MCF 10A (cell line): ENCODE measurements at regions of chr2 and their contacts with region 1.

Region 1: GRCh38 chr2:172234716-172235691 is 132.3 kb upstream of the DLX2 start:
- DNase-seq: no peak
- H3K4me3 Mint-ChIP-seq: no peak overlapping the region
- H3K27ac Mint-ChIP-seq: no peak overlapping the region
- H3K4me1 Mint-ChIP-seq: peaks cover 25% of the 10 kb centered on the region
- H3K27me3 Mint-ChIP-seq: no peaks in the 10 kb centered on the region
- CTCF ChIP-seq: no peak

Region 2: GRCh38 chr2:172179045-172179701 is 55.8 kb before region 1 on chr2:
- CTCF ChIA-PET with region 1: interaction called, 54 read pairs
- POLR2A ChIA-PET with region 1: interaction called, 65 read pairs
- intact Hi-C with region 1: no loop called
- DNase-seq: peak; percentile 89
- H3K4me3 Mint-ChIP-seq: no peak overlapping the region
- H3K27ac Mint-ChIP-seq: peak overlapping the region; percentile 9
- H3K4me1 Mint-ChIP-seq: peaks cover 28% of the 10 kb centered on the region
- H3K27me3 Mint-ChIP-seq: no peaks in the 10 kb centered on the region
- CTCF ChIP-seq: no peak

Region 3: GRCh38 chr2:172246649-172247048 is 11.6 kb after region 1 on chr2:
- CTCF ChIA-PET with region 1: interaction called, 20 read pairs
- POLR2A ChIA-PET with region 1: interaction called, 245 read pairs
- intact Hi-C with region 1: no loop called
- DNase-seq: peak; percentile 57
- H3K4me3 Mint-ChIP-seq: no peak overlapping the region
- H3K27ac Mint-ChIP-seq: peak overlapping the region; percentile 100
- H3K4me1 Mint-ChIP-seq: peaks cover 68% of the 10 kb centered on the region
- H3K27me3 Mint-ChIP-seq: no peaks in the 10 kb centered on the region
- CTCF ChIP-seq: no peak

Region 4: DNA sequence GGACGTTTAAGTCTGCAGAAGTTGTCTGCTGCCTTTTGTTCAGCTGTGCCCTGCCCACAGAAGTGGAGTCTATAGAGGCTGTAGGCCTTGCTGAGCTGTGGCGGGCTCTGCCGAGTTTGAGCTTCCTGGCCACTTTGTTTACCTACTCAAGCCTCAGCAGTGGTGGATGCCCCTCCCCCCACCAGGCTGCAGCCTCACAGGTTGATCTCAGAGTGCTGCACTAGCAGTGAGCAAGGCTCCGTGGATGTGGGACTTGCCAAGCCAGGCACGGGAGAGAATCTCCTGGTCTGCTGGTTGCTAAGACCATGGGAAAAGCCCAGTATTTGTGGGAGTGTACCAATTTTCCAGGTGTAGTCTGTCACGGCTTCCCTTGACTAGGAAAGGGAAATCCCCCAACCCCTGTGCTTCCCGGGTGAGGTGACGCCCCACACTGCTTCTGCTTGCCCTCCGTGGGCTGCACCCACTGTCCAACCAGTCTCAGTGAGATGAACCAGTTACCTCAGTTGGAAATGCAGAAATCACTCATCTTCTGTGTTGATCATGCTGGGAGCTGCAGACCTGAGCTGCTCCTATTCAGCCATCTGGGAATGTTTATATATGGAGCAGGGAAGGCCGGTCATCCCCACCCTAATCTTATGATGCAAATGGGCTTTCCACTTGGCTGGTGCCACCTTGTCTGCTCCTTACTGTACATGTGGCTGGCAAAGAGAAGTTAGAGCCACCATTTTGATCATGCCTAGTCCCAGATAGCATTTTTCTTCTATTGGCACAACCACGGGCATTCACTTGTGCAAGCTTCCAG is 35.5 kb after region 1 on chr2:
- CTCF ChIA-PET with region 1: no interaction called
- POLR2A ChIA-PET with region 1: interaction called, 10 read pairs
- intact Hi-C with region 1: no loop called
- DNase-seq: no peak
- H3K4me3 Mint-ChIP-seq: no peak overlapping the region
- H3K27ac Mint-ChIP-seq: no peak overlapping the region
- H3K4me1 Mint-ChIP-seq: peaks cover 6% of the 10 kb centered on the region
- H3K27me3 Mint-ChIP-seq: no peaks in the 10 kb centered on the region
- CTCF ChIP-seq: no peak

Region 5: DNA sequence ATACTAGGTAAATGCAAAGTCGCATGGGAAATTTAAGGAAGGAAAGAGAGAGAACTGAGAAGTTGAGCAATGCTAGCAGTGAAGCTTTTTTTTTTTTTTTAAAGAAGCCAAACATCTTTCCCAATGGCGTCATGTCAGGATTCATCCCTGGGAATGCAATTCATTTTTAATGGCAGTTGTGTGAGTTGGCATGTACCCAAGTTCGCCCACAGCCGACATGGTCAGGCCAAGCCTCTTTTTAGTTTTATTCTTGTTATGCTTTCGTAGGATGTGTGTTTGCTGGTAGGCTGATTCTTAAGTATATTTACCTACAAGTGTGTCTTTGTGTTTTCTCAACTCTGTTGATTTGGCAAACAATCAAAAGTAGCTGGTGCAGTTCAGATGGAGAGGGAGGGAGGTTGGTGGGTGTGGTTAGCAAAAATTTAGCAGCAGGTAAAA is 64.8 kb after region 1 on chr2:
- CTCF ChIA-PET with region 1: no interaction called
- POLR2A ChIA-PET with region 1: interaction called, 12 read pairs
- intact Hi-C with region 1: no loop called
- DNase-seq: peak; percentile 94
- H3K4me3 Mint-ChIP-seq: peak overlapping the region; percentile 61
- H3K27ac Mint-ChIP-seq: peak overlapping the region; percentile 68
- H3K4me1 Mint-ChIP-seq: peaks cover 26% of the 10 kb centered on the region
- H3K27me3 Mint-ChIP-seq: no peaks in the 10 kb centered on the region
- CTCF ChIP-seq: no peak

Region 6: DNA sequence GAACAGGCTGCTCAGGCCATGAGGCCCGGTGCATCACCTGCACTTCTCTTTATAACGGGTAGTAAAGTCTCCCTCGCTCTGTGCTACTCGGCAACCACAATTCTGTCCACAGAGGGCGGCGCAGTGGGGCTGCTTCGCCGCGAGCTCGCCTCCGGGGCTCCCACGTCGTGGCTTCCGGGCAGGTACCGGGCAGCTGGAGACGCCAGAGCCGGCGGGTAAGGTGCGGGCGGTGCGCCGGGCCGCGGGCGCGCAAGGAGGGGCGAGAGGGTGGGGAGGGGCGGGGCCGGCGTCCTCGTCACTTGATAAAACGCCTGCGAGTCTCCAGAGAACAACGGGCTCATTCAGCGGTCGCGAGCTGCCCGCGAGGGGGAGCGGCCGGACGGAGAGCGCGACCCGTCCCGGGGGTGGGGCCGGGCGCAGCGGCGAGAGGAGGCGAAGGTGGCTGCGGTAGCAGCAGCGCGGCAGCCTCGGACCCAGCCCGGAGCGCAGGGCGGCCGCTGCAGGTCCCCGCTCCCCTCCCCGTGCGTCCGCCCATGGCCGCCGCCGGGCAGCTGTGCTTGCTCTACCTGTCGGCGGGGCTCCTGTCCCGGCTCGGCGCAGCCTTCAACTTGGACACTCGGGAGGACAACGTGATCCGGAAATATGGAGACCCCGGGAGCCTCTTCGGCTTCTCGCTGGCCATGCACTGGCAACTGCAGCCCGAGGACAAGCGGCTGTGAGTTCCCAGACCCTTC is 192.4 kb after region 1 on chr2 and contains the start of gene ITGA6:
- CTCF ChIA-PET with region 1: interaction called, 4 read pairs
- POLR2A ChIA-PET with region 1: interaction called, 103 read pairs
- intact Hi-C with region 1: no loop called
- DNase-seq: peak; percentile 83
- H3K4me3 Mint-ChIP-seq: peak within 1 kb of the TSS; percentile 86
- H3K27ac Mint-ChIP-seq: peak within 1 kb of the TSS; percentile 95
- H3K4me1 Mint-ChIP-seq: peaks cover 16% of the 10 kb centered on the region
- H3K27me3 Mint-ChIP-seq: no peaks in the 10 kb centered on the region
- CTCF ChIP-seq: no peak
- total RNA-seq, gene ITGA6: 315 and 323 TPM in 2 replicates

Region 7: GRCh38 chr2:172456002-172456401 is 221.0 kb after region 1 on chr2:
- CTCF ChIA-PET with region 1: interaction called, 30 read pairs
- POLR2A ChIA-PET with region 1: interaction called, 124 read pairs
- intact Hi-C with region 1: no loop called
- DNase-seq: no peak
- H3K4me3 Mint-ChIP-seq: peak overlapping the region; percentile 25
- H3K27ac Mint-ChIP-seq: peak overlapping the region; percentile 82
- H3K4me1 Mint-ChIP-seq: peaks cover 68% of the 10 kb centered on the region
- H3K27me3 Mint-ChIP-seq: no peaks in the 10 kb centered on the region
- CTCF ChIP-seq: no peak

Region 8: GRCh38 chr2:172472446-172473033 is 237.5 kb after region 1 on chr2:
- CTCF ChIA-PET with region 1: no interaction called
- POLR2A ChIA-PET with region 1: no interaction called
- intact Hi-C with region 1: no loop called
- DNase-seq: no peak
- H3K4me3 Mint-ChIP-seq: no peak overlapping the region
- H3K27ac Mint-ChIP-seq: peak overlapping the region; percentile 16
- H3K4me1 Mint-ChIP-seq: no peaks in the 10 kb centered on the region
- H3K27me3 Mint-ChIP-seq: no peaks in the 10 kb centered on the region
- CTCF ChIP-seq: no peak